ENCODE measurements at regions of chr7 and their contacts with region 1.

Region 1: GRCh38 chr7:135662373-135663114 is at the start of gene STMP1:
- DNase-seq: peak; percentile 97 to 99 (median 98)
- ATAC-seq: peak; percentile 97 to 99 (median 98)
- H3K4me3 ChIP-seq: peak within 1 kb of the TSS; percentile 72 to 95 (median 86)
- H3K27ac ChIP-seq: peak within 1 kb of the TSS; percentile 69 to 97 (median 94)
- H3K4me1 ChIP-seq: peaks cover 0 to 54% (median 21%) of the 10 kb centered on the region in 12 donors
- H3K27me3 ChIP-seq: no peaks in the 10 kb centered on the region
- CTCF ChIP-seq: peak in 8 of 12 donors; percentile 66 to 93 (median 83)
- POLR2A ChIP-seq: peak in 1 of 2 donors; percentile 94
- total RNA-seq, gene STMP1: 14.7 to 34.7 (median 29.2) TPM

Region 2: GRCh38 chr7:135977007-135977741 is 314.6 kb after region 1 on chr7 and contains the start of gene MTPN:
- intact Hi-C with region 1: loop called in 4 of 10 experiments (anchors 1 to 10 kb)
- DNase-seq: peak; percentile 98 to 100 (median 99)
- ATAC-seq: peak; percentile 99
- H3K4me3 ChIP-seq: peak within 1 kb of the TSS; percentile 70 to 98 (median 92)
- H3K27ac ChIP-seq: peak within 1 kb of the TSS; percentile 56 to 94 (median 87)
- H3K4me1 ChIP-seq: peaks cover 6 to 79% (median 49%) of the 10 kb centered on the region in 12 donors
- H3K27me3 ChIP-seq: no peaks in the 10 kb centered on the region
- CTCF ChIP-seq: no peak
- POLR2A ChIP-seq: peak in 1 of 2 donors; percentile 70
- total RNA-seq, gene MTPN: 58.7 to 130 (median 90.4) TPM

Region 3: GRCh38 chr7:136009488-136010079 is 347.0 kb after region 1 on chr7:
- intact Hi-C with region 1: loop called in 3 of 10 experiments (anchors 5 to 10 kb)
- DNase-seq: no peak
- ATAC-seq: no peak
- H3K4me3 ChIP-seq: no peak overlapping the region
- H3K27ac ChIP-seq: no peak overlapping the region
- H3K4me1 ChIP-seq: no peaks in the 10 kb centered on the region
- H3K27me3 ChIP-seq: no peaks in the 10 kb centered on the region
- CTCF ChIP-seq: peak; percentile 69 to 87 (median 81)
- POLR2A ChIP-seq: no peak

Measured in heart left ventricle (tissue), 16 donors.